Posterior vena cava (tissue), 2 donors: ENCODE measurements at regions of chr9 and their contacts with region 1.

Region 1: DNA sequence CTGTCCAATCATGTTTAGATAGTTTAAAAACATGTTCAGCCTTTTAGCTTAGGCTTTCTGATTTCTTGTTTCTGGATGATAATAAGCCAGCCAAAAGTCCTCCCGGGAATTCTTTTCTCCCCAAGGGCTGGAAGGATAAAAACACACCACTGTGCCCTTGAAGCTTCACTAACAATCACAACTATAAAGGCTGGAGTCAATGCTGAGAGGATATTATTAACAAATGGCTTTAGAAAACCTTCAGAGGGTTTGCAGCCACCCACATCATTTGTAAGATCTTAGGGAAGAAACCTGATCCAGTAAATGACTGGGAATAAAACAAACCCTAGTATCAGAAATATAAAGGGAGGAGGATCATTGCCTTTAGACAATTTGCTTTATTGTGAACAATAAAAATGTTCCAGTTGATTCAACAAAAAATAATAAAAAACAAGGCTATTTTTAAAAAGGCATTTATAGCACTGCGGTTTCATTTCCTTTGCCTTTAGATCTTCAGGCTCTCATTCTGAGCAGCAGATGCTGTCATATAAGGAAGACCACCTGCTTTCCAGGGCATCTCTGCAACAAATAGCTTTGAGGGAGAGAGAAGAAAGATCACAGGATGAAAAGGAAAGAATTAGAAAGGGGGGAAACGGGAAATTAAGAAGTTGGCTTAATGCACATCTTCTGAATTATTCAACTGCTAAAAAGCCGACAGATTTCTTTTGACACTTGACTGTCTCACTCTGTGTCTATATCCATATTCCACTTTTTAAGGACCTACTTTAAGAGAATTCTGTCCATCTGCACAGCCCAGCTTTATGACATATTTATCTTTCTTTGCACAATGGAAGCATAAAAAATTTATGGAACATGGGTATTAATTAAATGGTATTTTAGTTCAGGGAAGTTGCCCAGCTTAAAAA is 277.2 kb upstream of the SLC24A2 start:
- DNase-seq: no peak

Region 2: DNA sequence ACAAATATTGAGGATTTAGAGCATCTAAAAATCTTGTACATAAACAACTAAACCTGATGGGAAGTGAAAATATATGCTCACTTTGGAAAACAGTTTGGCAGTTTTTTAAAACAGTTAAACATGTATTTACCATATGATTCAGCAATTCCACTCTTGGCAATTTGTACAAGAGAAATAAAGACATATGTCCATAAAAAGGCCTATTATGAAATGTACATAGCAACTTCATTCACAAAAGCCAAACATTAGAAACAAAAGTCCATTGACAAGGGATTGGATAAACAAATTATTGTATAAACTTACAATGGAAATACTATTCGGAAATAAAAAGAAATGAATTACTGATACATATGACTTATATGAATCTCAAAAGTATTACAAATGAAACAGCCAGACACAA is 81.0 kb before region 1 on chr9:
- intact Hi-C with region 1: loop called in 1 of 2 experiments (anchors 2 kb)
- DNase-seq: no peak

Region 3: DNA sequence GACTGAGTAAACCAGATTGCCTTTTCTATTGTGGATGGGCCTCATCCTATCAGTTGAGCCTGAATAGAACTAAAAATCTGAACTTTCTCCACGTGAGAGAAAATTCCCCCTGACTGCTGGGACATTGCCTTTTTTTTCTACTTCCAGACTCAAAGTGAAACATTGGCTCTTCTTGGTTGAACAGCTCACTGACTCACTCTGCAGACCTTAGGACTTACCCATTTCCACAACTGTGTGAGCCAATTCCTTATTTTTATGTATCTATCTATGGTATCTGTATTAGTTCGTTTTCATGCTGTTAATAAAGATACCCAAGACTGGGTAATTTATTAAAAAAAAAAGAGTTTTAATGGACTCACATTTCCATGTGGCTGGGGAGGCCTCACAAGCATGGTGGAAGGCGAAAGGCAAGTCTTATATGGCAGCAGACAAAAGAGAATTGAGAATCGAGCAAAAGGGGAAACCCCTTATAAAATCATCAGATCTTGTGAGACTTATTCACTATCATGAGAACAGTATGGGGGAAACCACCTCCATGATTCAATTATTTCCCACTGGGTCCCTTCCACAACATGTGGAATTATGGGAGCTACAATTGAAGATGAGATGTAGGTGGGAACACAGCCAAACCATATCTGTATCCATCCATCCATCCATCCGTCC is 29.5 kb after region 1 on chr9:
- intact Hi-C with region 1: no loop called
- DNase-seq: no peak